ENCODE measurements at regions of chr11 and their contacts with region 1.

Region 1: DNA sequence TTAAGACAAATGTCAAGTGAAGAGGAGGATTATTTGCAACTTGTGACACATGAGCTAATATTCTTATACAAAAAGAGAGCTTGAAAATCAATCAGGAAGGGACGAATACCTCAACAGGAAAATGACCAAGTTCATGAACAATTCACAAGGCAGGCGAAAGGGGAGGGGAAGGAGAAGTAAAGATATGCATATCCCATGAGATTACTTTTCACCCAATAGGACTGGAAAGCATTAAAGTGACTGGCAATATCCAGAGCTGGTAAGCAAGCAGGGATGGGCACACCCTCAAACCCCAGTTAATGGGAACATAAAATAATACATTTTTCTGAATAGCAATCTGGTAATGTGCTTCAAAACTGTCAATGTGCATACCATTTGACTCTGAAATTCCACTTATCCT is 129.5 kb downstream of the SLC1A2 start:
- DNase-seq: no peak
- H3K4me3 ChIP-seq: no peak overlapping the region
- H3K4me3 Mint-ChIP-seq: no peak overlapping the region
- H3K27ac ChIP-seq: no peak overlapping the region
- H3K27ac Mint-ChIP-seq: peak overlapping the region in 1 of 7 donors; percentile 27
- H3K4me1 ChIP-seq: peaks cover 4 to 31% of the 10 kb centered on the region in 2 donors
- H3K4me1 Mint-ChIP-seq: peaks cover 21% of the 10 kb centered on the region
- H3K27me3 ChIP-seq: no peaks in the 10 kb centered on the region
- H3K27me3 Mint-ChIP-seq: peaks cover 0 to 4% (median 0%) of the 10 kb centered on the region in 3 donors
- CTCF ChIP-seq: no peak

Region 2: GRCh38 chr11:35246745-35247144 is 43.1 kb before region 1 on chr11:
- intact Hi-C with region 1: loop called in 1 of 2 experiments (anchors 10 kb)
- DNase-seq: no peak
- H3K4me3 ChIP-seq: no peak overlapping the region
- H3K4me3 Mint-ChIP-seq: no peak overlapping the region
- H3K27ac ChIP-seq: no peak overlapping the region
- H3K27ac Mint-ChIP-seq: no peak overlapping the region
- H3K4me1 ChIP-seq: peaks cover 8 to 11% of the 10 kb centered on the region in 2 donors
- H3K4me1 Mint-ChIP-seq: peaks cover 10% of the 10 kb centered on the region
- H3K27me3 ChIP-seq: no peaks in the 10 kb centered on the region
- H3K27me3 Mint-ChIP-seq: no peaks in the 10 kb centered on the region
- CTCF ChIP-seq: no peak

Region 3: GRCh38 chr11:35363854-35364780 is 74.3 kb after region 1 on chr11:
- intact Hi-C with region 1: no loop called
- DNase-seq: peak in 1 of 3 donors; percentile 28
- H3K4me3 ChIP-seq: no peak overlapping the region
- H3K4me3 Mint-ChIP-seq: no peak overlapping the region
- H3K27ac ChIP-seq: no peak overlapping the region
- H3K27ac Mint-ChIP-seq: peak overlapping the region in 1 of 7 donors; percentile 68
- H3K4me1 ChIP-seq: no peaks in the 10 kb centered on the region
- H3K4me1 Mint-ChIP-seq: peaks cover 4% of the 10 kb centered on the region
- H3K27me3 ChIP-seq: no peaks in the 10 kb centered on the region
- H3K27me3 Mint-ChIP-seq: peaks cover 0 to 3% (median 1%) of the 10 kb centered on the region in 3 donors
- CTCF ChIP-seq: no peak

Measured in CD14-positive monocyte (primary cell).